ENCODE measurements at regions of chr5 and their contacts with region 1.

Region 1: GRCh38 chr5:66807743-66808142 is 211.6 kb downstream of the MAST4 start:
- H3K4me3 ChIP-seq: no peak overlapping the region
- H3K27ac ChIP-seq: no peak overlapping the region
- H3K4me1 ChIP-seq: no peaks in the 10 kb centered on the region
- CTCF ChIP-seq: peak; percentile 81; the same call in 1 of the 2 replicates

Region 2: DNA sequence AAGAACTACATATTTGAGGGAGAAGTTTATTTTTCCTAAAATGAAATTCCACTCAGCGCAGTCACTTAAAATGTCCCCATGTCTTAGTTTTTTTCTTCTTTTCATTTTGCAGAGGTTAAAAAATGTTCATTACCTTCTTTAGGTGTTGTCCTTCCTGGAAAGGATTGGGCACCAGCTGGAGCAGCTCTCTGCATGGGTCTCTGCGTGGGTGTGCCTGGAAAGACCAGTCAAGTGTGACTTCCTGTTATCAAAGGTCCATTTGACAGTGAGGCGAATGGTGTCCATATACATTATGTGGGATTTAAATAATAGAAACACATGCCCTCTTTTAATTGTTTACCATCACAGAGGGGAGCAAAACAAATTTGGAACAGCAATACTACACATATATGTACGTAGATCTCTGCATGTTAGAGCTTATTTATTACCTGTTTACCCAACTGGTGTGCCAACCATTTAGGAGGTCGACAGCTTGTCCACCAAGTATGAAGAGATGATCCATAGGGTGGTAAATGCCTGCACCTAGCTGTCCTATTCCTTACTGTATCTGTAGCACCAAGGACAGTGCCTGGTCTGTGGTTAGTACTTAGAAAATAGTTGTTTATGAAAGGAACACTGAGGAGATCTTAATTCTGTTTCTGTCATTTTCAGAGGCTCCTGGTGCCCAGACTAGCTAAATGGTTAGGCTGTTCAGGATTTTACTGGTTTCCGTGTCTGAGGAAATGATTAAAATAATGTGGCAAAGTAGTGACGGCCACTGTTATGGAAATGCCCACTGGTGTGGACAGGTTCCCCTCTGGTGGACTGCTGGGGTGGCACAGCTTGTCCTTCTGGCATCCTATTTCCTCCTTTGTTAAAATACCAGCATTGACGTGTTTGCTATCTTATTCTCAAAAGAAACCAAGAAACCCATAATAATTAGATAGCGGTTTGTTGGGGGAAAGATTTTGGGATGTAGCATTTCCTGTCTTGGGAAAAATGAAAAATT is 11.1 kb before region 1 on chr5:
- CTCF ChIA-PET with region 1: interaction called, 10 read pairs
- POLR2A ChIA-PET with region 1: no interaction called
- H3K4me3 ChIP-seq: no peak overlapping the region
- H3K27ac ChIP-seq: no peak overlapping the region
- H3K4me1 ChIP-seq: no peaks in the 10 kb centered on the region
- CTCF ChIP-seq: no peak

Region 3: GRCh38 chr5:66840511-66841013 is 32.8 kb after region 1 on chr5:
- CTCF ChIA-PET with region 1: no interaction called
- POLR2A ChIA-PET with region 1: no interaction called
- H3K4me3 ChIP-seq: no peak overlapping the region
- H3K27ac ChIP-seq: no peak overlapping the region
- H3K4me1 ChIP-seq: no peaks in the 10 kb centered on the region
- CTCF ChIP-seq: no peak